Gastrocnemius medialis (tissue), 4 donors: ENCODE measurements at regions of chr19 and their contacts with region 1.

Region 1: GRCh38 chr19:40285353-40286234 is 449 bp upstream of the AKT2 start:
- DNase-seq: peak; percentile 99 to 100
- ATAC-seq: peak; percentile 88 to 90
- H3K4me3 ChIP-seq: peak overlapping the region; percentile 69 to 94 (median 77)
- H3K27ac ChIP-seq: peak overlapping the region; percentile 89 to 99 (median 95)
- H3K4me1 ChIP-seq: peaks cover 44 to 48% of the 10 kb centered on the region in 2 donors
- H3K27me3 ChIP-seq: no peaks in the 10 kb centered on the region
- CTCF ChIP-seq: no peak
- POLR2A ChIP-seq: peak in 1 of 2 donors; percentile 48

Region 2: DNA sequence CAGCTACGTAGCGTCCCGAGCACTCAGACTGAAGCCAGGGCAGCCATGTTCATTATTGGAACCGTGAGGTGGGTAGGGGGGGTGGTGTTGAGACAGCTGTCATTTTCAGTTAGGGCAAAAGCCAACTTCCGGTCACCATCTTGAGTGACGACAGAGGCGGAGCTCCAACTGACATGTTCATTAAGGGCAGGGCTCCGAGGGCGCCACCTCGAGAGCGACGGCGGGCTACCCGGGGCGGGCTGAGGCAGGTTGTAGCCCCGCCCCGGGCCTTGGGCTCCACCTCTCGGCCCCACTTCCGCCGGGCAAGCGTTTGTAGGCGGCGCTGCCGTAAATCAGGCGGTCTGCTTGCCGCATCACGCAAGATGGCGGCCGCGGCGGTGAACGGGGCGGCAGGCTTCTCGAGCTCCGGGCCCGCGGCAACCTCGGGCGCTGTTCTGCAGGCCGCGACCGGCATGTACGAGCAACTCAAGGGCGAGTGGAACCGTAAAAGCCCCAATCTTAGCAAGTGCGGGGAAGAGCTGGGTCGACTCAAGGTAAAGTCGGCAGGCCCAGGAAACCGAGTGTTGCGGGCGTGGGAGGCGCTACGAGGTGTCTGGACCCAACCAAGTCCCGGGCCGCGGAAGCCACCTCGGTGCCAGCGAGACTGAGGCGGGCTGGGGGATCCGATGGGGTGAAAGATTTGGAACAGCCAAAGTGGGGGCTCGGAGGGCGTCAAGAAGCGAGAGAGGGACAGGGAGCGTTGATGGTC is 1911.0 kb before region 1 on chr19 and contains the start of gene PSMD8:
- in situ Hi-C with region 1: no loop called
- intact Hi-C with region 1: loop called (anchors 10 kb)
- DNase-seq: peak; percentile 99 to 100
- ATAC-seq: peak; percentile 81 to 88
- H3K4me3 ChIP-seq: peak within 1 kb of the TSS; percentile 91 to 99 (median 96)
- H3K27ac ChIP-seq: peak within 1 kb of the TSS; percentile 97 to 100 (median 98)
- H3K4me1 ChIP-seq: peaks cover 16 to 25% of the 10 kb centered on the region in 2 donors
- H3K27me3 ChIP-seq: no peaks in the 10 kb centered on the region
- CTCF ChIP-seq: peak in 3 of 5 experiments; percentile 6 to 34 (median 16)
- POLR2A ChIP-seq: peak; percentile 99
- total RNA-seq, gene PSMD8: 819 to 1,400 (median 1,309) TPM

Region 3: GRCh38 chr19:39254531-39255345 is 1030.9 kb before region 1 on chr19:
- in situ Hi-C with region 1: no loop called
- intact Hi-C with region 1: no loop called
- DNase-seq: no peak
- ATAC-seq: no peak
- H3K4me3 ChIP-seq: no peak overlapping the region
- H3K27ac ChIP-seq: no peak overlapping the region
- H3K4me1 ChIP-seq: no peaks in the 10 kb centered on the region
- H3K27me3 ChIP-seq: peaks cover 9 to 22% (median 9%) of the 10 kb centered on the region in 3 donors
- CTCF ChIP-seq: no peak
- POLR2A ChIP-seq: no peak

Region 4: DNA sequence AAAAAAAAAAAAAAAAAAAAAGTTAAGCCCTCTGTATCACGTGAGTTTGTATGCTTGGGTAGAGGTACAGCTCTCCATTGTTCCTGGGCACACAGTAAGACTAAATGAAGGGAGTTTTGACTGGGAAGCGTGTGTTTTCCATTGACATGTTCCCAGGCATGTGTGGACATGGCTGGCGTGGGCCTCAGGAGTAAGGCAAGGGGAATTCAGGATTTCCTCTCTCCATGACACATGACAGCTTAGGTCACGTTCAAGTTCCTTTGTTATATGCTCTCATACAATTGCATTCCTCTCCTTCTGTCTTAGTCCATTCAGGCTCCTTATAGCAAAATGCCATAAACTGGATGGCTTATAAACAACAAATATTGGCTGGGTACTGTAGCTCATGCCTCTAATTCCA is 111.5 kb before region 1 on chr19:
- in situ Hi-C with region 1: no loop called
- intact Hi-C with region 1: no loop called
- DNase-seq: no peak
- ATAC-seq: no peak
- H3K4me3 ChIP-seq: no peak overlapping the region
- H3K27ac ChIP-seq: no peak overlapping the region
- H3K4me1 ChIP-seq: no peaks in the 10 kb centered on the region
- H3K27me3 ChIP-seq: no peaks in the 10 kb centered on the region
- CTCF ChIP-seq: no peak
- POLR2A ChIP-seq: no peak

Region 5: GRCh38 chr19:40246292-40247073 is 39.1 kb before region 1 on chr19:
- in situ Hi-C with region 1: no loop called
- intact Hi-C with region 1: no loop called
- DNase-seq: no peak
- ATAC-seq: no peak
- H3K4me3 ChIP-seq: no peak overlapping the region
- H3K27ac ChIP-seq: peak overlapping the region in 1 of 4 donors; percentile 29
- H3K4me1 ChIP-seq: peaks cover 29 to 59% of the 10 kb centered on the region in 2 donors
- H3K27me3 ChIP-seq: no peaks in the 10 kb centered on the region
- CTCF ChIP-seq: no peak
- POLR2A ChIP-seq: no peak

Region 6: DNA sequence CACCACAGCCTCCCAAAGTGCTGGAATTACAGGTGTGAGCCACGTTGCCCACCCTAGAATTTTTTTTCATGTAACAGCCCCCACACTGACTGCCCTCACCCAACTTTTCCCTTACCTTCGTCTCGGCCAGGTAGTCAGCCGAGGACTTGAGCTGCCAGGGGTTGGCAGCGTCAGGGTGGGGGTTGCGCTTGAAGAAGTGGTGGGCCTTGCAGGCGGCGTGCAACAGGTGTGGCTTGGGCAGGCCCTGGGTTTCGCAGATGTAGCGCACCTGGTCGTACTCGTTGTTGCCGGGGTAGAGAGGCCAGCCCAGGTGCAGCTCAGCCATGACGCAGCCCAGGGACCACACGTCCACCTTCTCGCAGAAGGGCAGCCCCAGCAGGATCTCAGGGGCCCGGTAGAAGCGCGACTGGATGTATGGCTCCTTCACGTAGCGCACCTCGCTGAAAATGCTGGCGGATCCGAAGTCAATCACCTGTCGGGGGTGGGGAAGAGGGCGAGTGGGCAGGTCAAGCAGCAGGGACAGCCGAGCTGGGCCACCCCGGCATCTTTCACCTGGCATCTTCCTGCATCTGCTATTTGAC is 98.2 kb after region 1 on chr19:
- in situ Hi-C with region 1: no loop called
- intact Hi-C with region 1: no loop called
- DNase-seq: no peak
- ATAC-seq: no peak
- H3K4me3 ChIP-seq: no peak overlapping the region
- H3K27ac ChIP-seq: no peak overlapping the region
- H3K4me1 ChIP-seq: no peaks in the 10 kb centered on the region
- H3K27me3 ChIP-seq: no peaks in the 10 kb centered on the region
- CTCF ChIP-seq: no peak
- POLR2A ChIP-seq: no peak

Region 7: DNA sequence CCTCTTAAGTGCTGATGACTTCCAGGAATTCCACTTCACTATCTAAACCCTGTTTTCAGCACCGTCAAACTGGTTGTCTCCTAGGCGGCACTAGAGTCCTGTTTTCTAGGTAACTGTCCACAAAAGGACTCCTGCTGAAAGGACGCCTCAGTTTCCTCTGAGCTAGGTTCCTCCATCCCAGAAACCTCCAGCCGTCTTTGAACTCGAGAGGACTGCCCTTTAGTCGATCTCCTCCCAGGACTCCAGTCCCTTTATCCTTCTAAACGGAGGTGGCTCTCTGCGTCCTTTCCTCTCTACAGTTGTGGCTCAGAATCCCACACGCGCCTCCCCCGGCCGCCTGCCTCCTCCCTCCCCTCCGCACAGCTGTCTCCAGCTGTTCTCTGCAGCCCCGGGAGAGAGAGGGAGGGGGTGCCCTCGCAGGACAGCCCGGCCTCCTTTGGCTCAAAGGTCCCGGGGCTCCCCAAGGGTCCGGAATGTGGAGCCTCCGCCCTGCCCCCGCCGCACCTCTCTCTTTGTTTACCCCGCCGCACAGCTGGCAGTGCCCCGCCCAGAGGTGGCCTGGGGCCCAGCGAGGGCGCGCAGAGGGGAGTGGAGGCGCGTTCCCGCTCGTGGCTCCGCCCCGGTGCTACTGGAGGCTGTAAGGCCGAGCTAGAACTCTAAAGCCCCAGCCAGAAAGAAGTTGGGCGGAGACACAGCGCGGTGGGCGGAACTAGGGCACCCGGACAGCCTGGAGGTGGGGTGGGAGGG is 318.0 kb after region 1 on chr19:
- in situ Hi-C with region 1: no loop called
- intact Hi-C with region 1: loop called (anchors 5 kb)
- DNase-seq: peak; percentile 95 to 97
- ATAC-seq: peak; percentile 84 to 85
- H3K4me3 ChIP-seq: peak overlapping the region; percentile 47 to 80 (median 54)
- H3K27ac ChIP-seq: peak overlapping the region; percentile 73 to 84 (median 78)
- H3K4me1 ChIP-seq: peaks cover 31 to 38% of the 10 kb centered on the region in 2 donors
- H3K27me3 ChIP-seq: peaks cover 19 to 30% (median 21%) of the 10 kb centered on the region in 3 donors
- CTCF ChIP-seq: no peak
- POLR2A ChIP-seq: peak; percentile 57 to 81

Region 8: GRCh38 chr19:41883821-41884733 is 1598.5 kb after region 1 on chr19:
- in situ Hi-C with region 1: no loop called
- intact Hi-C with region 1: loop called (anchors 10 kb)
- DNase-seq: peak; percentile 90 to 93
- ATAC-seq: peak; percentile 95
- H3K4me3 ChIP-seq: peak overlapping the region; percentile 79 to 89 (median 84)
- H3K27ac ChIP-seq: peak overlapping the region; percentile 70 to 77 (median 74)
- H3K4me1 ChIP-seq: peaks cover 16 to 18% of the 10 kb centered on the region in 2 donors
- H3K27me3 ChIP-seq: no peaks in the 10 kb centered on the region
- CTCF ChIP-seq: peak in 2 of 5 experiments; percentile 36
- POLR2A ChIP-seq: peak; percentile 51 to 67